Psoas muscle (tissue), 8 donors: ENCODE measurements at regions of chr10 and their contacts with region 1.

Region 1: GRCh38 chr10:71285180-71285545 is 33.9 kb upstream of the SLC29A3 start:
- DNase-seq: peak; percentile 48 to 76
- ATAC-seq: peak; percentile 79 to 90 (median 82)
- H3K4me3 ChIP-seq: no peak overlapping the region
- H3K27ac ChIP-seq: no peak overlapping the region
- H3K4me1 ChIP-seq: no peaks in the 10 kb centered on the region
- H3K27me3 ChIP-seq: peaks cover 0 to 4% (median 0%) of the 10 kb centered on the region in 3 donors
- CTCF ChIP-seq: peak; percentile 80

Region 2: DNA sequence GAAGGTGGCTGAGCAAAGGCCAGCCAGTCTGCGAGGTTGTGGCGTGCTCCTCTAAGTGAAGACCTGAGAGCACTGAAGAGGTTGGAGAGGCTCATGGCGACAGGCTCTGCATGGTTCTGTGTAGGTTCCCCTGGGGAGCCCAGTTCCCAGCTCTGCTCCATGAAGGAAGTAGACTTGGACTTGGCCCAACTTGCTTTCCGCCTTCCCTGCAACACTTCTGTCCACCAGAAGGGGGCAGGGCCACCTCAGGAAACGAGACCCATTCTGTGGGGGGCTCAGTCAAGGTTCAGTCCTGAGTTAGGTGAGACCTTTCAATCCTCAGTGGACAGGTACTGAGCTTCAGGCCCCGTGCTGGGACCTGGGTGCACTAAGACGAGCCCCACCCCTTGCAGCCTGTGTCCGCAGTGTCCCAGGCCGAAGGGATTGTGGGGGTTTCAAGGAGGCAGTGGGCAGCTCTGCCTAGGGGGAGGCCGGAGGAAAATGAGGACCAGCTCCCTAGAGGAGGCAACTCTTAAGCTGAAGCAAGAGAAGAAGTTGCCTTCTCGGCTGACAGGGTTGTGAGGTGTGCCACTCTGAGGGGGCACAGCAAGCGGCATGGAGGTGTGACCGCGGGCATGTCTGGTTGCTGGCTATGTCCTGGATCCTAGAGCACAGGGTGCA is 381.8 kb before region 1 on chr10:
- intact Hi-C with region 1: loop called in 1 of 2 experiments (anchors 1 kb)
- DNase-seq: peak; percentile 57 to 77
- ATAC-seq: peak; percentile 57 to 82 (median 68)
- H3K4me3 ChIP-seq: no peak overlapping the region
- H3K27ac ChIP-seq: no peak overlapping the region
- H3K4me1 ChIP-seq: peaks cover 4% of the 10 kb centered on the region
- H3K27me3 ChIP-seq: peaks cover 0 to 3% (median 0%) of the 10 kb centered on the region in 3 donors
- CTCF ChIP-seq: peak; percentile 92

Region 3: DNA sequence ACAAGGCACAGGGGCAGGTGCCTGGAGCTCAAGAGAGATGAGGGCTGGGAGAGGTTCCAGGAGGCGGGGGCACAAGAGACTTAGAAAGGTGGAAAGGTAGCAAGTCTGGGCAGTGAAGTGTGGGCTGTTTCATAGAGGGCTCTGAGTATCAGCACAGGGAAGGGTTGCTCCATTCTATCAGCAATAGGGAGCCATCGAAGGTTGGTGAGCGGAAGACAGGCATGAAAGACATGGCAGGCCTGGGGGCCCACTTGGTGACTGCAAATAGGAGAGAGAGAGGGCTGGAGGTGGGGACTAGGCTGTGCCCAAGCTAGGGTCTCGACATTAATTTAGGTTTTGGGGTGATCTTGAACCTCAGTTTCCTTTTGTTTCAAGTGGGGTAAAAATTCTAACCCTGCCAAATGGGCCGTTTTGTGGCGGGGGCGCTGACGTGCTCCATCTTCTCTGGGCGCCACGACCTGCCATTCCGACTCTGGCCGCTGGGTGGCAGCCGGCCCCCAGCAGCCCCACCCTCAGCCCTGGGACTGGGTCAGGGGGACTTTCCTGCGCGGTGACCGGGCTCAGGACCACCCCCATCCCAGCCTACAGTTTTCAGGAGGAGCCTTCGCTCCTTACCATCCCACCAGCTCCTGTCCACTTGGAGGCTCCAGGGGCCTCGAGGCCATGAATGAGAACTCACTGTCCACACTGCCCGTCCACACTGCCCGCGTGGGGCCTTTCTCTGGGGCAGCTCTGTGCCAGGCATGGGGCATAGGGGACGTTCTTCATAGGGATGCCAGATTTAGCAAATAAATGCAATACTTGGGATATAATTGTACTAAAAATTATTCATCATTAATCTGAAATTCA is 359.6 kb before region 1 on chr10:
- intact Hi-C with region 1: loop called (anchors 2 kb)
- DNase-seq: peak; percentile 38 to 70
- ATAC-seq: peak; percentile 83 to 92 (median 86)
- H3K4me3 ChIP-seq: no peak overlapping the region
- H3K27ac ChIP-seq: no peak overlapping the region
- H3K4me1 ChIP-seq: no peaks in the 10 kb centered on the region
- H3K27me3 ChIP-seq: no peaks in the 10 kb centered on the region
- CTCF ChIP-seq: peak; percentile 98